ENCODE measurements at regions of chr10 and their contacts with region 1.

Region 1: DNA sequence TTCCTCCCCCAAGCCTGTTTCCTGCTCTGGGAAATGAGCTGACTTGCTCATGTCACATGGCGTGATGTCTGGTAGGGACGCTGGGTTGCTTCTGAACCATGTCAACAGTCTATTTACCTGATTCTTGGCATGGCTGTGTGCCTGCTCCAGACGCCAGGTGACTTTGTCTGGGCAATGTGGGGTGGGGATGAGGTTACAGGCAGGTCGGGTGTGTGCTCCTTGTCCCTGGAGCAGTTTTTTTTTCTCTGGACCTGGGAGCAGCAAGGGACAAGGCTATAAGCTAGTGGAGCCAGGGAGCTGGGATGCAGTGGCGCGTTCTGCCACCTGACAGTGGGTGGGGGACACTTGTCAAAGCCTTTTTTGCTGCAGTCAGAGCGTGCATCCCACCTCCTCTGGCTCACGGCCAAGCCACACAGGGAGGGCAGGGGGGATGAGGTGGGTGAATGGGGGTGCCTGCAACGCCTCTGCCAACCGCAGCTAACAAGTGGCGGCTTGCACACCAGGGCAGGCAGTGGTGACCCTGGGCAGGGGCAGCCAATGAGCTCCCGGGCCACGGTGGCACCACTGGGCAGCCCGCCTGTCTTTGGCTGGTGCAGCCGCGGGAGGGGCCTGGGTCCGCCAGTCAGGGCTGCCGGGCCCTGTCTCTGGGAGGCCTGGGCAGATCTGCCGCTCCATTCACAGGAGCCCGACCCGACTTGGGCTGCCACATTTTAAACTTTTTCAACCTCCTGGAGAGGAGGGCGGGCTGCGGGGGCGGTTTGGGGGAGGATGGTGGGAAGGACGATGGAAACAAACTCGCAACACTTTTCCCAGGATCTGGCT is 22.9 kb downstream of the DNAJB12 start:
- DNase-seq: peak; percentile 85 to 98 (median 92)
- ATAC-seq: peak; percentile 70
- H3K4me3 ChIP-seq: peak overlapping the region; percentile 2 to 31
- H3K4me3 Mint-ChIP-seq: peak overlapping the region; percentile 77
- H3K27ac ChIP-seq: peak overlapping the region; percentile 44 to 69
- H3K27ac Mint-ChIP-seq: peak overlapping the region; percentile 99
- H3K4me1 ChIP-seq: peaks cover 94% of the 10 kb centered on the region
- H3K4me1 Mint-ChIP-seq: peaks cover 91% of the 10 kb centered on the region
- H3K27me3 ChIP-seq: no peaks in the 10 kb centered on the region
- H3K27me3 Mint-ChIP-seq: no peaks in the 10 kb centered on the region
- CTCF ChIP-seq: peak; percentile 28

Region 2: DNA sequence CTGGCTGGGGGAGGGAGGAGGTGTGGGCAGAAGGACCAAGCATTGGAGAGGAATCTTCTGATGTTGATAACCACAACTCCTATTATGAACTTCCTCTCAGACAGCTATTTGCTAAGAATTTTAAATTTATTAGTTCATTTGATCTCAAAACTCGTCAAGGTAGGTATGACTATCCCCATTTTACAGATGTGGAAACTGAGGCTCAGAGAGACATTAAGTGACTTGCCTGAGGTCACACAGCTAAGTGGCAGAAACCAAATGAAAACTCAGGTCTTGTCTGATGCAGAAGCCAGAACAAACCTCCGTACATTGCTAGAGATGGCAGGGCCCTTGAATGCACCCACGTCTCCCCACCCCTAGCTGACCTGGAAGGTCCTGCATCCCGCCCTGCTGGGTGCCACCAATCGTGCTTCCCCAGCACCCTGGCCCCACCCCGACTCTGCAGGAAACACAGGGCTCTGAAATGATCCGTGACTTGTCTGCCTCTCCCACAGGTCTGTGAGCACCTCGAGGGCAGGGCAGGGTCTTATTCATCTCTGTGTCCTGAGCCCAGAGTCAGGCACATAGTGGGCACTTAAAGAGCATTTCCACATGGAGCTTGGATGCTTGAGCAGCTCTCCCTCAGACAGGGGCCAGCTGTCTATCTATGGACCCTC is 1858.9 kb before region 1 on chr10:
- CTCF ChIA-PET with region 1: no interaction called
- POLR2A ChIA-PET with region 1: no interaction called
- intact Hi-C with region 1: no loop called
- DNase-seq: no peak
- ATAC-seq: no peak
- H3K4me3 ChIP-seq: no peak overlapping the region
- H3K4me3 Mint-ChIP-seq: no peak overlapping the region
- H3K27ac ChIP-seq: no peak overlapping the region
- H3K27ac Mint-ChIP-seq: no peak overlapping the region
- H3K4me1 ChIP-seq: peaks cover 15% of the 10 kb centered on the region
- H3K4me1 Mint-ChIP-seq: peaks cover 20% of the 10 kb centered on the region
- H3K27me3 ChIP-seq: no peaks in the 10 kb centered on the region
- H3K27me3 Mint-ChIP-seq: peaks cover 5% of the 10 kb centered on the region
- CTCF ChIP-seq: no peak

Region 3: GRCh38 chr10:72048450-72049124 is 283.2 kb before region 1 on chr10:
- CTCF ChIA-PET with region 1: interaction called, 51 read pairs
- POLR2A ChIA-PET with region 1: no interaction called
- intact Hi-C with region 1: no loop called
- DNase-seq: peak; percentile 80 to 95 (median 90)
- ATAC-seq: peak; percentile 98
- H3K4me3 ChIP-seq: no peak overlapping the region
- H3K4me3 Mint-ChIP-seq: no peak overlapping the region
- H3K27ac ChIP-seq: no peak overlapping the region
- H3K27ac Mint-ChIP-seq: no peak overlapping the region
- H3K4me1 ChIP-seq: no peaks in the 10 kb centered on the region
- H3K4me1 Mint-ChIP-seq: peaks cover 7% of the 10 kb centered on the region
- H3K27me3 ChIP-seq: no peaks in the 10 kb centered on the region
- H3K27me3 Mint-ChIP-seq: no peaks in the 10 kb centered on the region
- CTCF ChIP-seq: peak; percentile 99

Region 4: DNA sequence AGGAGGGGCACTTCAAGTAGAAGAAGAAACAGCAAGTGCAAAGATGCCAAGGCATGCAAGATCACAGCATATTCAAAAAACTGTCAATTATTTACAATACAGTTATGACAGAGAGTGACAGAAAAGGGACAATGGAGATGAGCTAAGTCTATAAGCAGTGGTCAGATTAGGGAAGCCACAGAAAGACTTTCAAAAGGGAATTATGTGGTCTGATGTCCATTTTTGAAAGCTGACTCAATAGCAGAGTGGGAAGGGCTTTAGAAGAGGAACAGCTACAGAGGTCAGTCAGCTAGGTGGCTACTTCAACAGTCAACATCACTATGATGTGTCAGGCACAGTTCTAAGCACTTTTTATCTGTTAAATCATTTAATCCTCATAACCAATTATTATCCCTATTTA is 198.3 kb before region 1 on chr10:
- CTCF ChIA-PET with region 1: interaction called, 84 read pairs
- POLR2A ChIA-PET with region 1: interaction called, 4 read pairs
- intact Hi-C with region 1: no loop called
- DNase-seq: no peak
- ATAC-seq: no peak
- H3K4me3 ChIP-seq: no peak overlapping the region
- H3K4me3 Mint-ChIP-seq: no peak overlapping the region
- H3K27ac ChIP-seq: no peak overlapping the region
- H3K27ac Mint-ChIP-seq: peak overlapping the region; percentile 30
- H3K4me1 ChIP-seq: peaks cover 41% of the 10 kb centered on the region
- H3K4me1 Mint-ChIP-seq: peaks cover 43% of the 10 kb centered on the region
- H3K27me3 ChIP-seq: no peaks in the 10 kb centered on the region
- H3K27me3 Mint-ChIP-seq: no peaks in the 10 kb centered on the region
- CTCF ChIP-seq: no peak

Region 5: DNA sequence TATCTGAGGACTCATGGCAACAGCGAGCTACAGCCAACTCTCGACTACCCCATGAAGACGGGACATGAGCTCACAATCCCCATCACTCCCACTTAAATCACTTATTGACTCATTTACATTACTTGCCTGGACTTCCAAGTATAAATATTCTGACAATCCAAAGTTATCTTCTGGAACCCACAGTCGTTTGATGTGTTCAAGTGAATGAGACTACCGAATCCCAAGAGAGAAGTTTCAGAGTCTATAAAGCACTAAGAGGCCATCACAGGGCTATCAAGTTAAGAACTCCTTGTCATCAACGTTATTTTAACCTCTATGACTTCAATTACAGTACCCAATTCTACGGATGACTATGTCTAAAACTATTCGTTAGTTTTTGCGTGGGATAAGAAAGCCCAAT is 127.5 kb before region 1 on chr10:
- CTCF ChIA-PET with region 1: no interaction called
- POLR2A ChIA-PET with region 1: no interaction called
- intact Hi-C with region 1: no loop called
- DNase-seq: no peak
- ATAC-seq: no peak
- H3K4me3 ChIP-seq: no peak overlapping the region
- H3K4me3 Mint-ChIP-seq: no peak overlapping the region
- H3K27ac ChIP-seq: no peak overlapping the region
- H3K27ac Mint-ChIP-seq: no peak overlapping the region
- H3K4me1 ChIP-seq: peaks cover 14% of the 10 kb centered on the region
- H3K4me1 Mint-ChIP-seq: peaks cover 10% of the 10 kb centered on the region
- H3K27me3 ChIP-seq: no peaks in the 10 kb centered on the region
- H3K27me3 Mint-ChIP-seq: no peaks in the 10 kb centered on the region
- CTCF ChIP-seq: no peak

Region 6: DNA sequence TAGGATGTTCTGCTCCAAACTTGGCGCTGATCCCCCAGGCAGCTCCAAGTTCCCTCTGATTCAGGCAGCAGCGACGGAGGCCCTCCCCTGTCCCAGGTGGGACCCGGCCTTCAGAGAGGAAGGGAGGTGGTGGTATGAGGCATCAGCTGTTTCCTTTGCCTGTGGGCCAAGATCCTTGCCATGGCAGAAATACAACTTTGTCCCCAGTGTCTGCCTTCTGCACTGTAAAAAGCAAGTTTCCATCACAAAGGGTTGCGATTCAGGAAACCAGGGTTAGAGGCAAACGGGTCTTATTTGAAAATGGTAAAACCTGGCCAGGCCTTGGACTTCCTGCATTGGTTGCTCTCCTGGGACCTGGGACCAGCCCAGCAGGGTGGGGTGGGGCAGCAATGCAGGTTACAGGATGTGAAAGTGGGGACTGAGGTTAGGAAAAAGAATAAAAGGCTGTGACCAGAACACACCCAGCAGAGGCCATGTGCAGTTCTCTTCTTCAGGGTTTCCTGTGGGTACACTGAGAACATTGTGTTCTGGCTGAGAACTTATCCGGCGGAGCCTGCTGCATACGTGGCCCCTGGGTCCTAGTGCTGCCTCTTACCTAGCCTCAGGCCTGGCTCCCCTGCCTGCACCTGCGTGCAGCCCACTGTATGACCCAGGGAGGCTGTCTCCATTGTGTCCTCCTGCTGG is 83.2 kb before region 1 on chr10:
- CTCF ChIA-PET with region 1: interaction called, 56 read pairs
- POLR2A ChIA-PET with region 1: interaction called, 5 read pairs
- intact Hi-C with region 1: loop called (anchors 1 kb)
- DNase-seq: peak; percentile 40 to 91 (median 77)
- ATAC-seq: peak; percentile 88
- H3K4me3 ChIP-seq: peak overlapping the region; percentile 25 to 28
- H3K4me3 Mint-ChIP-seq: peak overlapping the region; percentile 81
- H3K27ac ChIP-seq: peak overlapping the region; percentile 61 to 64
- H3K27ac Mint-ChIP-seq: peak overlapping the region; percentile 96
- H3K4me1 ChIP-seq: peaks cover 90% of the 10 kb centered on the region
- H3K4me1 Mint-ChIP-seq: peaks cover 82% of the 10 kb centered on the region
- H3K27me3 ChIP-seq: no peaks in the 10 kb centered on the region
- H3K27me3 Mint-ChIP-seq: no peaks in the 10 kb centered on the region
- CTCF ChIP-seq: no peak

Region 7: GRCh38 chr10:72273410-72274212 is 58.2 kb before region 1 on chr10 and contains the start of gene DDIT4:
- CTCF ChIA-PET with region 1: interaction called, 106 read pairs
- POLR2A ChIA-PET with region 1: interaction called, 20 read pairs
- intact Hi-C with region 1: loop called (anchors 1 kb)
- DNase-seq: peak; percentile 94 to 99 (median 97)
- ATAC-seq: peak; percentile 94
- H3K4me3 ChIP-seq: peak within 1 kb of the TSS; percentile 69 to 99
- H3K4me3 Mint-ChIP-seq: peak within 1 kb of the TSS; percentile 98
- H3K27ac ChIP-seq: peak within 1 kb of the TSS; percentile 82 to 83
- H3K27ac Mint-ChIP-seq: peak within 1 kb of the TSS; percentile 93
- H3K4me1 ChIP-seq: peaks cover 30% of the 10 kb centered on the region
- H3K4me1 Mint-ChIP-seq: peaks cover 52% of the 10 kb centered on the region
- H3K27me3 ChIP-seq: no peaks in the 10 kb centered on the region
- H3K27me3 Mint-ChIP-seq: no peaks in the 10 kb centered on the region
- CTCF ChIP-seq: no peak
- total RNA-seq, gene DDIT4: 351 to 360 TPM

Region 8: GRCh38 chr10:72354478-72355213 is 22.8 kb after region 1 on chr10 and contains the start of gene DNAJB12:
- CTCF ChIA-PET with region 1: interaction called, 68 read pairs
- POLR2A ChIA-PET with region 1: no interaction called
- intact Hi-C with region 1: loop called in 1 of 2 experiments (anchors 2 kb)
- DNase-seq: peak; percentile 76 to 95 (median 88)
- ATAC-seq: peak; percentile 82
- H3K4me3 ChIP-seq: peak within 1 kb of the TSS; percentile 96 to 98
- H3K4me3 Mint-ChIP-seq: peak within 1 kb of the TSS; percentile 98
- H3K27ac ChIP-seq: peak within 1 kb of the TSS; percentile 87 to 97
- H3K27ac Mint-ChIP-seq: peak within 1 kb of the TSS; percentile 96
- H3K4me1 ChIP-seq: peaks cover 19% of the 10 kb centered on the region
- H3K4me1 Mint-ChIP-seq: peaks cover 45% of the 10 kb centered on the region
- H3K27me3 ChIP-seq: no peaks in the 10 kb centered on the region
- H3K27me3 Mint-ChIP-seq: no peaks in the 10 kb centered on the region
- CTCF ChIP-seq: no peak
- total RNA-seq, gene DNAJB12: 33.9 to 37.5 TPM

Region 9: DNA sequence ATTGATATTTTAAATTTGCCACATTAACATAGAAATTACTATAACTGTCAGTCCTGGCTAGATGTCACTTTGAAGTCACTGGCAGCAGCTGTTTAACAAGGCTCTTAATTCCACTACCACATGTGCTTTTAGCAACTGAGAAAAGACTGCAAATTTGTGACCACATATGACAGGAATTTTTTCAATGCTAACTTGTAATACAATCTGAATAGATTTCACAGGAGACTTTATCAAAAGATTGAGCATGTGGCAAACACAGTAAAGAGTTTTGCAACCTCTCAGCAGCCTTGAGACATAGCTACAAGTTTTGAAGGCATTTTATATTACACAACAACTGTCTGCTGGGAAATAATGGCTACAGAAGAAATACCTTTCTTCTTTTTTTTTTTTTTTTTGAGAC is 221.0 kb after region 1 on chr10:
- CTCF ChIA-PET with region 1: no interaction called
- POLR2A ChIA-PET with region 1: no interaction called
- intact Hi-C with region 1: no loop called
- DNase-seq: no peak
- ATAC-seq: no peak
- H3K4me3 ChIP-seq: no peak overlapping the region
- H3K4me3 Mint-ChIP-seq: no peak overlapping the region
- H3K27ac ChIP-seq: no peak overlapping the region
- H3K27ac Mint-ChIP-seq: no peak overlapping the region
- H3K4me1 ChIP-seq: no peaks in the 10 kb centered on the region
- H3K4me1 Mint-ChIP-seq: no peaks in the 10 kb centered on the region
- H3K27me3 ChIP-seq: no peaks in the 10 kb centered on the region
- H3K27me3 Mint-ChIP-seq: no peaks in the 10 kb centered on the region
- CTCF ChIP-seq: no peak